Activated T-helper 2 cell treated with anti-CD3 and anti-CD28 coated beads, Interferon-gamma antibody, Interleukin-2, Interleukin-4, amounts not matched to agents 10 μg/mL and 5 μg/mL and 100 μg/mL, durations not matched to agents 14 hours and 24 hours and 36 hours (primary cell): ENCODE measurements at regions of chr3 and their contacts with region 1.

Region 1: GRCh38 chr3:101779047-101779821 is at the start of gene NXPE3:
- DNase-seq: peak; percentile 90
- H3K4me3 Mint-ChIP-seq: peak within 1 kb of the TSS; percentile 95
- H3K27ac Mint-ChIP-seq: peak within 1 kb of the TSS; percentile 89
- H3K4me1 Mint-ChIP-seq: peaks cover 40% of the 10 kb centered on the region
- H3K27me3 Mint-ChIP-seq: no peaks in the 10 kb centered on the region
- total RNA-seq, gene NXPE3: 18.1 and 21.2 TPM in 2 replicates

Region 2: DNA sequence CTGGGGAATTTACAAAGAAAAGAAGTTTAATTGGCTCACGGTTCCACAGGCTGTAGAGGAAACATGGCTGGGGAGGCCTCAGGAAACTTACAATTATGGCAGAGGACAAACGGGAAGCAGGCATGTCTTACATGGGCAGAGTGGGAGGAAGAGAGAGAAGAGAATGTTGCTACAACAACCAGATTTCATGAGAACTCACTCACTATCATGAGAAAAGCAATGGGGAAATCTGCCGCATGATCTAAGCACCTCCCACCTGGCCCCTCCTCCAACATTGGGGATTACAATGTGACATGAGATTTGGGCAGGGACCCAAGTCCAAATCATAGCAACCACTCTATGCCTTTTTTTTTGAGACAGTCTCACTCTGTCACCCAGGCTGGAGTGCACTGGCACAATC is 176.5 kb before region 1 on chr3:
- intact Hi-C with region 1: no loop called
- DNase-seq: no peak
- H3K4me3 Mint-ChIP-seq: no peak overlapping the region
- H3K27ac Mint-ChIP-seq: no peak overlapping the region
- H3K4me1 Mint-ChIP-seq: peaks cover 2% of the 10 kb centered on the region
- H3K27me3 Mint-ChIP-seq: no peaks in the 10 kb centered on the region

Region 3: DNA sequence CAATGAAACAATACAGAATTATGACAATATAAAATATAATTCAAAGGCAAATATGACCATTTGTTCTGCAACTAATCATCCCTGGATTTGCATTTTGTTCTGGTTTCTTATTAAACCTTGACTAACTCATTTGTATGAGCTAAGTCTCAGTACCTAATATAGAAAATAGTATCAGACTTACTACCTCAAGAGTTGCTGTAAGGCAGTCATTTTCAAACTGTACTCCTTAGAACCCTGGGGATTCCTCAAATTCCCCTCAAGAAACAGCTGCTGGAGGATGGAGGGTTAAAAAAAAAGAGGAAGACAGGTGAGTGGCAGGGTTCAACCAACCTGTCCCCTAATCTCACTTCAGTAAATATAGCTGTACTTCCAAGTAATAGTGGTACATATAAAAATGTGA is 113.4 kb before region 1 on chr3:
- intact Hi-C with region 1: no loop called
- DNase-seq: no peak
- H3K4me3 Mint-ChIP-seq: no peak overlapping the region
- H3K27ac Mint-ChIP-seq: peak overlapping the region; percentile 15
- H3K4me1 Mint-ChIP-seq: peaks cover under 1% of the 10 kb centered on the region
- H3K27me3 Mint-ChIP-seq: no peaks in the 10 kb centered on the region

Region 4: GRCh38 chr3:101685870-101686412 is 93.3 kb before region 1 on chr3:
- intact Hi-C with region 1: loop called (anchors 2 kb)
- DNase-seq: peak; percentile 31
- H3K4me3 Mint-ChIP-seq: peak overlapping the region; percentile 99
- H3K27ac Mint-ChIP-seq: peak overlapping the region; percentile 98
- H3K4me1 Mint-ChIP-seq: peaks cover 30% of the 10 kb centered on the region
- H3K27me3 Mint-ChIP-seq: no peaks in the 10 kb centered on the region